ENCODE measurements at regions of chr1 and their contacts with region 1.

Region 1: DNA sequence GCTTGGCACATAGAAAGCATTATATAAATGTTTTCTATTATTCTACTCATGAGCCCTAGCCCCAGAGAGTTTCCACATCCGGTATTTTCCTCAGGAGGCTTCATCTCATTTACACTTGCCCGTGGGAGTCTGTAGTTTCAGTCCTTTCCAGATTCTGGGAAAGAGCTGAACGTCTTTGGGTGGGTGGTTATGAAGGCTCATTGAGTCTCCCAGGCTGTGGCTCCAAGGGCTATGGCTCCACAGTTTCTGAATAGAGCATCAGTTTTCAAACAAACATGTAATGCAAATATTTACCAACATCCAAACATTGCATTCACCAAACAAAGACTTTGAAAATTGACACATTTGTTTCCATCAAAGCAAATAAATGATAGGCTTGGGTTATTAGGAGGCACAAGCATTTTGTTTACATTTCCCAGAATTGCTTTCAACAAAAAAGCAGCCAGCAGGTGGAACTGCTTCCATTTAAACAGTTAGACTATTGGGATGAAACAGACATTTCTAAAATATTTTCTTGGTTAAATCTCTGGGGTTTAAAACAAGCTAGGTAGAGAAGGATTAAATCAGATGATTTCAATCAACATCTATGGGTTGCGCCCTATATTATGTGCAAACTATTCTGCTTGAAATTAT is 1.3 kb upstream of the LEMD1 start:
- DNase-seq: no peak
- H3K4me3 ChIP-seq: no peak overlapping the region
- CTCF ChIP-seq: no peak

Region 2: DNA sequence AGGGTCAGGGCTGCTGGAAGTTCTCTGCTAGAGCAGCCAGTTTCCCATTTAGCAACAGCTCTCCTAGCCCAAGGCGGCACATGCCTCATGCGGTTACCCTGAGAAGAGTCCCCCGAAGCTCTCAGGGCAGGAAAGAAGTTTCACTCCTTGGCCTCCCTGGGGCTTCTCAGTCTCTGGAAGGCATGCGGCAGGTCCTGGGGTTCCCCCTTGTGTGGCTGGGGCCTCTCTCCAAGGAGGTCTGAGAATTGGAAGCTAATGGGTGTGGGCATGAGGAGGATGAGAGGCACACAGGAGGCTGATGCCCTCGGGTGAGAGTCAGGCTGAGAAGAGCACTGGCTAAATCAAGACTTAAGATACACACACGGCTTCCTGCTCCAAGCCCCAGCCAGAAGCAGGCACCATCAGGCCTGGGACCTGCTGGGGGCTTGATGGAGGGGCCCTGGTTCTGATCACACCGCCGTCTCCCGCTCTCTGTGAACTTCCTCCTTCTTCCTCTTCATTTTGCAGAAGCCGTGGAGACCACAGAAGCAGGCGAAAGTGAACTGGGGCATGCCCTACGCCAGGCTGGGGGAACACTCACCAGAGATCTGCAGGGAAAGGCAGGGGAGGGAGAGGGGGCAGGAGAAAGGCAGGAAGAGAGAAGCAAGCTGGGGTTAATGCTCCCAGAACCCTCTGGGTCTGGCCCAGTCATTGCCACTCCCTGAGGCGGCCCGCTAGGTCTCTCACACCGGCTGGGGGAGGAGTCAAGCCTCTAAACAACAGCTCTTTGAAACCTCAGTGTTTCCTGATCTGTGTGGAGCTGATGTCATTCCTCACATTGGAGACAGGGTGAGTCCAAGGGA is 17.6 kb after region 1 on chr1:
- CTCF ChIA-PET with region 1: interaction called, 62 read pairs
- POLR2A ChIA-PET with region 1: no interaction called
- DNase-seq: no peak
- H3K4me3 ChIP-seq: no peak overlapping the region
- CTCF ChIP-seq: no peak

Measured in AG04449 (cell line).